A549 (cell line): ENCODE measurements at regions of chr5 and their contacts with region 1.

Region 1: GRCh38 chr5:174951146-174951780 is 226.9 kb downstream of the MSX2 start:
- DNase-seq: peak; percentile 81
- ATAC-seq: peak; percentile 96 to 98
- H3K4me3 ChIP-seq: no peak overlapping the region
- H3K27ac ChIP-seq: peak overlapping the region; percentile 10 to 46; a peak in 3 of 6 replicates
- H3K4me1 ChIP-seq: no peaks in the 10 kb centered on the region
- CTCF ChIP-seq: peak; percentile 90
- EP300 ChIP-seq: no peak
- POLR2A ChIP-seq: no peak
- RAD21 ChIP-seq: peak; percentile 96 to 97

Region 2: DNA sequence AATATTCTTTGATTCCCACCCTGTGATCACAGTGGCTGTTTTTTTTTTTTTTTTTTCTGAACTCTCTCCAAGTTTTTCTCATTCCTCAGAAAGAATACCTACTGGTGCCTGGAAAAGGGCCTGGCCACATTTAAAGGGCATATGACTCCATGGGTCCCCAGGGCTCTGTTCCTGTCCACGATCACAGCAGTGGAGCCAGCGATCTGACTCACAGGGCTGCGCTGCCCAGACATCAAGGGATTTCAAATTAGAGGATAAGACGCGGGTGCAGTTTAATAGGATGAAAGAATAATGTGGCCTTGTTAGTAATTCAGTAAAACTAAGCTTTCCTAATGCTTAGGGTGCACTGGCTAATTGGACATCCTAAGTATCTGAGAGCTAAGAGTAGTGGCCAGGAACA is 402.0 kb before region 1 on chr5:
- CTCF ChIA-PET with region 1: no interaction called
- POLR2A ChIA-PET with region 1: no interaction called
- DNase-seq: no peak
- ATAC-seq: no peak
- H3K4me3 ChIP-seq: no peak overlapping the region
- H3K27ac ChIP-seq: no peak overlapping the region
- H3K4me1 ChIP-seq: no peaks in the 10 kb centered on the region
- CTCF ChIP-seq: no peak
- EP300 ChIP-seq: no peak
- POLR2A ChIP-seq: no peak
- RAD21 ChIP-seq: no peak

Region 3: DNA sequence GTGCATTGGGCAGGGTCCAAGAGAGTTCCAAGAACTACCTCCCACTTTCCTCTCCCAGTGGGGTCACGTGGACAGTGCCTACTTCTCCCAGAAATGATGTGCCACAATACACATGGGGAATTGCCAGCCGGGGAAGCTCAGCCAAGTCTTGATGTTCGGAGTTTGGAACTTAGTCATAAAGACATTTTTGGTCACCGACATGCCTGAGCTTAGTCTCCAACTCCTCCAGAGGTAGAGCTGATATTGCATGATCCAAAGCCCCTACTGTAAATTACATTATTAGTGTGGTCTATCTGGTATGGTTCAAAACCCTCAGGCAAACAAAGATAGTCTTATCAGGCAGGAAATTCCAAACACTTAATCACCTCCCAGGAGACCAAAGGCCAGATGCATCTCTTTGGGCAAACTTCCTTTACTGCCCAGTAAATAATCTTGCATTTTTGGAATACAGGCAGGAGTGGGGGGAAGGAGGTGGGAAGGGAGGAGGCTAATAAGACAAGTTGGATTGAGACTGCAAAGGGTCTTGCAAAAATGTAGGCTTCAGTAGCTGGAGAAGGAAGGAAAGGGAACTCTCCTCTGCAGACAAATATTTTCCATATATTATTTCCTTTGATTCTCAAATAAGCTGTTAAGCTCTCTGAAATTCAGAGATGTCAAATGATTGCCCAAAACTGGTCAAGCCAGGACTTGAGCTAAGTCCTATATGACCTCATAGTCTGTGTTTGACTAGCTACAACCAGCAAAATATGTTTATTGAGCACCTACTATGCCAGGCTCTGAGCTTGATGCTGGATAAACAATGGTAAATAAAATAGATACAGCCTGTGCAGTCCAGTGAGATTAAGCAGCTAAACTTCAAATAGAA is 393.3 kb after region 1 on chr5:
- CTCF ChIA-PET with region 1: interaction called, 26 read pairs
- POLR2A ChIA-PET with region 1: no interaction called
- DNase-seq: peak; percentile 40 to 82
- ATAC-seq: peak; percentile 83 to 85
- H3K4me3 ChIP-seq: no peak overlapping the region
- H3K27ac ChIP-seq: peak overlapping the region; percentile 77 to 88; a peak in 5 of 6 replicates
- H3K4me1 ChIP-seq: peaks cover 52% of the 10 kb centered on the region
- CTCF ChIP-seq: no peak
- EP300 ChIP-seq: peak; percentile 91 to 95; a peak in 4 of 5 replicates
- POLR2A ChIP-seq: no peak
- RAD21 ChIP-seq: peak; percentile 32 to 66

Region 4: DNA sequence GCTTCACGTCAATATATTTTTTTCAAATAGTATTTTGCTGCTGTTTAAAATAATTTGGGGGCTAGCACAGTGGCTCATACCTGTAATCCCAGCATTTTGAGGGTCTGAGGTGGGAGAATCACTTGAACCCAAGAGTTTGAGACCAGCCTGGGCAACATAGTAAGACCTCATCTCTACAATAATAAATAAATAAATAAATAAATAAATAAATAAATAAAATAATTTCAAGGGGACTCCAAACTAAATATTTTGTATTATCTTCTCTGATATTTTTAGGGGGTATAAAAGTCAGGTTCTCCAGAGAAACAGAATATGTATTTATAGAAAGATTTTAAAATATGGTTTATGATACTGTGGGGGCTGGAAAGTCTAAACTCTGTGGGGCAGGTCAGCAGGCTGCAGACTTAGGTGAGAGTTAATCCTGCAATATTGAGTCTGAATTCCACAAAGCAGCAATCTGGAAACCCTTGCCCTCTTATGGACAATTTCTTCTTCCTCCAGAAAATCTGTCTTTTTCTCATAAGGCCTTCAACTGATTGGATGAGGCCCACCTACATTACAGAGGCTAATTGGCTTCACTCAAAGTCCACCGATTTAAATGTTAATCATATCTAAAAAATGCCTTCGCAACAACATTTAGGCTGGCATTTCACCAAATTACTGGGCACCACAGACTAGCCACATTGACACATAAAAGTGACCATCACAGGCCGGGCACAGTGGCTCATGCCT is 439.3 kb after region 1 on chr5:
- CTCF ChIA-PET with region 1: interaction called, 10 read pairs
- POLR2A ChIA-PET with region 1: no interaction called
- DNase-seq: no peak
- ATAC-seq: no peak
- H3K4me3 ChIP-seq: no peak overlapping the region
- H3K27ac ChIP-seq: no peak overlapping the region
- H3K4me1 ChIP-seq: peaks cover 21% of the 10 kb centered on the region
- CTCF ChIP-seq: no peak
- EP300 ChIP-seq: no peak
- POLR2A ChIP-seq: no peak
- RAD21 ChIP-seq: no peak

Region 5: GRCh38 chr5:175444060-175444904 is 493.0 kb after region 1 on chr5 and contains the start of gene DRD1:
- CTCF ChIA-PET with region 1: interaction called, 150 read pairs
- POLR2A ChIA-PET with region 1: no interaction called
- DNase-seq: peak; percentile 50 to 70
- ATAC-seq: peak; percentile 90 to 97
- H3K4me3 ChIP-seq: peak within 1 kb of the TSS; percentile 51
- H3K27ac ChIP-seq: peak within 1 kb of the TSS; percentile 72 to 87
- H3K4me1 ChIP-seq: peaks cover 16% of the 10 kb centered on the region; the same call in 1 of the 3 replicates
- CTCF ChIP-seq: peak; percentile 95
- EP300 ChIP-seq: no peak
- POLR2A ChIP-seq: no peak
- RAD21 ChIP-seq: peak; percentile 84 to 99
- polyA plus RNA-seq, gene DRD1: 5.7 and 6.6 TPM in 2 replicates

Region 6: DNA sequence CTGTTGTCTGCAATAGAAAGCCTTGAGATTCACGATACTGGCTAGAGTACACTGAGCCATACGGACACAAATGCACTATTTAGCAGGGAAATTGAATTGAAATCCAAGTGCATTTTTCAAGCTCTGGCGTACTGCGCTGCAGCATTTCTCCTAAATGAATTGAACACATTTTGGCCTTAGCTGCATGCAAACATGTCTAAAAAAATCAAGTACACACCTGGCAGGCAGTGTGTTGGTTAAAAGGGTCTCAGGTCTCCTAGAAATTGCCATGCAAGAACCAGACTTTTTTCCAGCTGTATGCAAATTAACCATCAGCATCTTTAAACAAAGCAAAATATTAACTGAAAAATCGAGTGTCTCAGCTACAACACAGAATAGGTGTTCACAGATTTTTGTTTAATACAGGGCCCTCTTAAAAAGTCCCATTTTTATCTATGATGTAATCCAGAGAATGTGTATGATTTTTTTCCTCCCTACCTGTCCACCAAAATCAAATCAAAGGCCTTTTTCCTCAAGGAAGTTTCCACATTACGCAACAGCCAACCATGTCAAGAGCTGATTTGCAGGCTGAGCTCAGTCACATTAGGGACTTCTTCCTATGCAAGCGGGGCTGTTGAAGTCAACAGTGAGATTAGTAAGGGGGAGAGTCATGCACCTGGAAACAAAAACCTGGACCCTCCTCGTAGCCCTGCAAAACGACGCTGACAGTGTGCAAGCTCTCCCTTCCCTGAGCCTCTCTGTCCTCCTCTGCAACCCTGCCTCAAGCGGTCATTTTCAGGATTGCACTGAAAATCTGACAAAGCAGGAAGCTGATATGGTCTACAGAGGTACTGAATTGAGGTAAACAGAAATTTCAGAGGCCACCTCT is 513.0 kb after region 1 on chr5:
- CTCF ChIA-PET with region 1: interaction called, 39 read pairs
- POLR2A ChIA-PET with region 1: no interaction called
- DNase-seq: peak; percentile 67
- ATAC-seq: peak; percentile 97 to 98
- H3K4me3 ChIP-seq: no peak overlapping the region
- H3K27ac ChIP-seq: peak overlapping the region in 1 of 2 experiments; percentile 56; a peak in 2 of 6 replicates
- H3K4me1 ChIP-seq: peaks cover 9% of the 10 kb centered on the region; the same call in 2 of the 3 replicates
- CTCF ChIP-seq: peak; percentile 53
- EP300 ChIP-seq: no peak
- POLR2A ChIP-seq: no peak
- RAD21 ChIP-seq: peak; percentile 30 to 55; a peak in 3 of 5 replicates